ENCODE measurements at regions of chr7 and their contacts with region 1.

Region 1: GRCh38 chr7:71733107-71733870 is 601.3 kb downstream of the GALNT17 start:
- DNase-seq: peak; percentile 85 to 93 (median 91)
- H3K4me3 ChIP-seq: peak overlapping the region; percentile 17
- H3K27ac ChIP-seq: no peak overlapping the region
- H3K4me1 ChIP-seq: no peaks in the 10 kb centered on the region
- H3K27me3 ChIP-seq: no peaks in the 10 kb centered on the region
- CTCF ChIP-seq: peak; percentile 89 to 98 (median 94)
- EP300 ChIP-seq: no peak
- POLR2A ChIP-seq: no peak

Region 2: GRCh38 chr7:70829221-70830059 is 903.8 kb before region 1 on chr7:
- intact Hi-C with region 1: loop called in 2 of 4 experiments (anchors 5 to 10 kb)
- DNase-seq: peak; percentile 35 to 80 (median 73)
- H3K4me3 ChIP-seq: no peak overlapping the region
- H3K27ac ChIP-seq: no peak overlapping the region
- H3K4me1 ChIP-seq: no peaks in the 10 kb centered on the region
- H3K27me3 ChIP-seq: no peaks in the 10 kb centered on the region
- CTCF ChIP-seq: peak; percentile 64 to 74 (median 68)
- EP300 ChIP-seq: no peak
- POLR2A ChIP-seq: no peak

Region 3: DNA sequence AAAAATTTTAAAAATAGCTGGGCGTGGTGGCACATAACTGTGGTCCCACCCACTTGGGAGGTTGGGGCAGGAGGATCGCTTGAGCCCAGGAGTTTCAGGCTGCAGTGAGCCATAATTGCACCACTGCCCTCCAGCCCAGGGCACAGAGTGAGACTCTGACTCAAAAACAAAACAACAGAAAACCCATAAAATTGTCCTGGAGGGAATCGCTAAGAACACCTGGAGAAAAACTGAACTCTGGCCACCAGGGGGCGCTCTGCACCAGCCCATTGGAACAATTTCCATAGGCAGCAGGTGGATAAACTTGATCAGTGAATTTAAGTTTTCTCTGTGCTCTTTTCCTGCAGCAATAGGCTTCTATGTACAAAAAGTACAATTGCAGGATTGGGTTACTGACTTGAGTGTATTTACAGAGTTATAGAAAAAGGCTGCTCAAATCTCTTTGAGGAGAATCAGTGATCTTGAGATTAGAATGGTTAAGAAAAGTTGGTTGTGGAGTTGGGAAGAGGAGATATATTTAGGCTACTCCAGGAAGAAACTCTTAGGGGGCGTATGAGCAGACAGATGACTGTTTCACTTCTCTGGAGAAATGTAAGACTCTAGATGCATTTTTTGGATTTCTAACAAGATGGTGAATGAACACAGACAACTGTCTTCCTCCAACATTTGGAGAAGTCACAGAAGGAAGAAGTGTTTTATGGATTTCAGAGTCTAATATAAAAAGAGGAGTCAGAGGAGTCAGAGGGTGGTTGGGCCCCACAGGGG is 876.2 kb before region 1 on chr7:
- intact Hi-C with region 1: loop called (anchors 2 to 5 kb)
- DNase-seq: peak; percentile 61 to 86 (median 82)
- H3K4me3 ChIP-seq: no peak overlapping the region
- H3K27ac ChIP-seq: no peak overlapping the region
- H3K4me1 ChIP-seq: no peaks in the 10 kb centered on the region
- H3K27me3 ChIP-seq: no peaks in the 10 kb centered on the region
- CTCF ChIP-seq: peak; percentile 86 to 87 (median 86)
- EP300 ChIP-seq: no peak
- POLR2A ChIP-seq: no peak

Region 4: DNA sequence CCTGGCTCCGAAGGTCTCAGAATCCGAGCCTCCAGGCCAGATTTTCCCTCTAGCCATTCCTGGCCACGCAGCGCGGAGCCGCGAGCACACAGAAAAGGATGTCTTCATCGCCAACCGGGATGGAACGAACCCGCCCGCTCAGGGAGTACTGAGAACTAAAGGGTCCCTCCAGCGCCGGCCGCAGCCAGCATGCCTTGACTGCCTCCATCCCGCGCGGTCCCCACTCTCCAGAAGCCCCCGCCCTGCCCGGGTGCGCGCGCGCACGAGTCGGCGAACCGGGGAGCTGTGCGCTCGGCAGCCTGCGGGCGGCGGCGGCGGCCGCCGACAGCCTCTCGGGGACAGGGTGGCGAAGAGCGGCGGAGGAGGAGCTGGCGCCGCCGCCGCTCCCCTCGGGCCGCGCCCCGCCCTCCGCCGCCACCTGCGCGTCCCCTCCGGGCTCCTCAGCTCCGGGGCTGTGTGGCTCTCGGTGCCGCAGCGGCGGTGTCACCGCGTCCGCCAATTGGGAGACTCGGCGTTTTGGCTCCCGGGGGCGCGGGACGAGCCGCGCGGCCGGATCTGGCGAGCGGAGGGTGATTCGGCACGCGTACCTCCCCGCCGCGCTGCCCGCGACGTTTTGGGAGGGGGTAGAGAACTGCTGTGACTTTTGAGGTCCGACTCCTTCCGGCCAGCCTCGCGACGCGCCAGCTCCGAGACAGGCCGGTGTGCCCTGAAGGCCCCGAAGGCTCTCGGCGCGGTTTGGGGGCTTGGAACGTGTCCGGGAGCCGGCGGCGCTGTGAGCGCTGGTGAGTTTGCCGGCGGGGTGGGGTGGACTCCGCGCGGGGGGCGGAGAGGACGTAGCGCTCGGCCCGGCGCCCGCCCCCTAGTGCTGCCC is 601.8 kb before region 1 on chr7:
- intact Hi-C with region 1: loop called in 2 of 4 experiments (anchors 2 to 10 kb)
- DNase-seq: peak; percentile 82 to 86 (median 85)
- H3K4me3 ChIP-seq: peak overlapping the region; percentile 60
- H3K27ac ChIP-seq: peak overlapping the region; percentile 73 to 87
- H3K4me1 ChIP-seq: peaks cover 8% of the 10 kb centered on the region
- H3K27me3 ChIP-seq: no peaks in the 10 kb centered on the region
- CTCF ChIP-seq: peak in 2 of 3 donors; percentile 49 to 55
- EP300 ChIP-seq: no peak
- POLR2A ChIP-seq: peak; percentile 38

Region 5: DNA sequence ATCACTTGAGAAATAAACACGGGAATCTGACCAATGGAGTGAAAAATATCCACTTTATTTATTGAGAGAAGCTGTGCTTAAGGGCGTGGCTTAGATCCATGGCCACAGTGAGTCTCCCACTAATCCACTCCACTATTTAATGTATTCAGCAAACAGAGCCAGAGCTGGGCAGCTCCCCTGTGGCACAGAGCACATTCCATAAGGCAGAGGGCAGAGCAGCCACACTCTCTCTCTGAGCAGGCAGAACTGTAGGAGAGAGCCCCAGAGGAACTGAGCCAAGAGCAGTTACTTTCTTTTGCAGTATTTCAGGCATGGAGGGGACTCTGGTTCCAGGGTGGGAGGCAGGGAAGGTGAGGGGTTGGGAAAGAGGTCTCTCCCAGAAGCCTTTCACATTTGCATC is 495.3 kb before region 1 on chr7:
- intact Hi-C with region 1: loop called in 1 of 4 experiments (anchors 10 kb)
- DNase-seq: peak in 4 of 5 donors; percentile 39 to 53 (median 44)
- H3K4me3 ChIP-seq: no peak overlapping the region
- H3K27ac ChIP-seq: peak overlapping the region; percentile 13 to 71
- H3K4me1 ChIP-seq: peaks cover 26% of the 10 kb centered on the region
- H3K27me3 ChIP-seq: no peaks in the 10 kb centered on the region
- CTCF ChIP-seq: no peak
- EP300 ChIP-seq: no peak
- POLR2A ChIP-seq: no peak